ENCODE measurements at regions of chr1 and their contacts with region 1.

Region 1: GRCh38 chr1:116377541-116378529 is 4.8 kb downstream of the ATP1A1 start:
- DNase-seq: peak in 9 of 10 donors; percentile 49 to 93 (median 65)

Region 2: DNA sequence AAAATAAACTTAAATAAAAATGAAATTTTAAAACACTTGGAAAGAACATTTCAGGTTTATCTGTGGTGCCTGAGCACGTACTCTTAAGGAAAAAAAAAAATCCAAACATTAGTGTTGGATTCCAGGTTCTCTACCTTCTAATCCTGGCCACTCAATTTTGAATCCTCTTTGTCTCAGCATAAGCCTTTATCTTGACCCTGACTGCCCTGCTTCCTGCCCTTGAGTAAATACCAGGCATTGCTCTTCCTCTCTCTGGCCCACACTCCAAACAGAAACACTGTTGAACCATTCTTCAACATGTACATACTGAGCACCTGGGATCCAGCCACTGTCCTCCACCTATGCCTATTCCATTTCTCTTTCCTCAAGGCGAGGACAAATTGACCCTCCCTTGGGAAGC is 747.5 kb before region 1 on chr1:
- intact Hi-C with region 1: no loop called
- DNase-seq: no peak

Region 3: GRCh38 chr1:116151739-116152576 is 225.9 kb before region 1 on chr1:
- intact Hi-C with region 1: loop called (anchors 5 kb)
- DNase-seq: peak; percentile 60 to 97 (median 78)

Region 4: GRCh38 chr1:116418091-116418830 is 40.4 kb after region 1 on chr1:
- intact Hi-C with region 1: loop called (anchors 5 kb)
- DNase-seq: peak; percentile 72 to 97 (median 80)

Region 5: GRCh38 chr1:116433275-116434257 is 55.7 kb after region 1 on chr1:
- intact Hi-C with region 1: loop called (anchors 2 kb)
- DNase-seq: peak; percentile 81 to 98 (median 88)